Transverse colon (tissue), 4 donors: ENCODE measurements at regions of chr20 and their contacts with region 1.

Region 1: GRCh38 chr20:3616250-3616649 is 46.9 kb downstream of the GFRA4 start:
- DNase-seq: no peak
- H3K4me3 ChIP-seq: no peak overlapping the region
- H3K27ac ChIP-seq: no peak overlapping the region
- H3K4me1 ChIP-seq: no peaks in the 10 kb centered on the region
- H3K27me3 ChIP-seq: no peaks in the 10 kb centered on the region
- CTCF ChIP-seq: no peak
- EP300 ChIP-seq: no peak
- POLR2A ChIP-seq: no peak

Region 2: DNA sequence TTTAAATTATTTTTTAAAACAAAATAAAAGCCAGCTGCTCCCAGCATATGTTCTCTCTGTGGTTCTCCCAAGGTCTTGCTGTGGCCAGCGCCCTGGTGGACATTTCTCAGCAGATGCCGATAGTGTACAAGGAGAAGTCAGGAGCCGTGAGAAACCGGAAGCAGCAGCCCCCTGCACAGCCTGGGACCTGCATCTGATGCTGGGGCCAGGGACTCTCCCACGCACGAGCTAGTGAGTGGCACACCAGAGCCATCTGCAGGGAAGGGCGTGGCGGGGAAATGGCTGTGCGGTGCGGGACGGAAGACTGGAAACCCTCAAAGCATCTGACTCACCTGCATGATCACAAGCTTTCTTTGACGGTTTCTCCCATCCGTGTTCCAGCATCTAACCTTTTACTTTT is 30.4 kb after region 1 on chr20:
- in situ Hi-C with region 1: no loop called
- intact Hi-C with region 1: loop called (anchors 1 kb)
- DNase-seq: no peak
- H3K4me3 ChIP-seq: no peak overlapping the region
- H3K27ac ChIP-seq: no peak overlapping the region
- H3K4me1 ChIP-seq: no peaks in the 10 kb centered on the region
- H3K27me3 ChIP-seq: no peaks in the 10 kb centered on the region
- CTCF ChIP-seq: no peak
- EP300 ChIP-seq: no peak
- POLR2A ChIP-seq: no peak

Region 3: GRCh38 chr20:3658716-3659491 is 42.7 kb after region 1 on chr20:
- in situ Hi-C with region 1: no loop called
- intact Hi-C with region 1: loop called (anchors 1 kb)
- DNase-seq: no peak
- H3K4me3 ChIP-seq: no peak overlapping the region
- H3K27ac ChIP-seq: no peak overlapping the region
- H3K4me1 ChIP-seq: peaks cover 0 to 6% (median 2%) of the 10 kb centered on the region in 4 donors
- H3K27me3 ChIP-seq: peaks cover 51% of the 10 kb centered on the region
- CTCF ChIP-seq: no peak
- EP300 ChIP-seq: no peak
- POLR2A ChIP-seq: no peak